Caco-2 (cell line): ENCODE measurements at regions of chr1 and their contacts with region 1.

Region 1: GRCh38 chr1:236484310-236484971 is 39.3 kb upstream of the LGALS8 start:
- DNase-seq: no peak
- H3K4me3 ChIP-seq: no peak overlapping the region
- H3K4me3 Mint-ChIP-seq: no peak overlapping the region
- H3K27ac Mint-ChIP-seq: no peak overlapping the region
- H3K4me1 ChIP-seq: 0 out of 2 replicates have a peak, but pooled peaks cover 8% of the 10 kb centered on the region
- H3K4me1 Mint-ChIP-seq: peaks cover 1% of the 10 kb centered on the region
- H3K27me3 ChIP-seq: no peaks in the 10 kb centered on the region
- H3K27me3 Mint-ChIP-seq: no peaks in the 10 kb centered on the region
- CTCF ChIP-seq: no peak

Region 2: GRCh38 chr1:237786066-237786719 is 1301.8 kb after region 1 on chr1:
- CTCF ChIA-PET with region 1: interaction called, 13 read pairs
- POLR2A ChIA-PET with region 1: no interaction called
- intact Hi-C with region 1: no loop called
- DNase-seq: no peak
- H3K4me3 ChIP-seq: no peak overlapping the region
- H3K4me3 Mint-ChIP-seq: no peak overlapping the region
- H3K27ac Mint-ChIP-seq: no peak overlapping the region
- H3K4me1 ChIP-seq: no peaks in the 10 kb centered on the region
- H3K4me1 Mint-ChIP-seq: no peaks in the 10 kb centered on the region
- H3K27me3 ChIP-seq: no peaks in the 10 kb centered on the region
- H3K27me3 Mint-ChIP-seq: no peaks in the 10 kb centered on the region
- CTCF ChIP-seq: no peak